Heart right ventricle (tissue), 16 donors: ENCODE measurements at regions of chr11 and their contacts with region 1.

Region 1: GRCh38 chr11:16613512-16614381 is 124.7 kb upstream of the C11orf58 start:
- DNase-seq: peak; percentile 89 to 92
- ATAC-seq: peak; percentile 95 to 98 (median 97)
- H3K4me3 ChIP-seq: peak overlapping the region; percentile 26 to 68 (median 57)
- H3K27ac ChIP-seq: peak overlapping the region; percentile 57 to 90 (median 80)
- H3K4me1 ChIP-seq: peaks cover 0 to 26% (median 9%) of the 10 kb centered on the region in 9 donors
- H3K27me3 ChIP-seq: peaks cover 0 to 100% (median 11%) of the 10 kb centered on the region in 7 donors
- CTCF ChIP-seq: peak; percentile 78 to 97 (median 91)

Region 2: DNA sequence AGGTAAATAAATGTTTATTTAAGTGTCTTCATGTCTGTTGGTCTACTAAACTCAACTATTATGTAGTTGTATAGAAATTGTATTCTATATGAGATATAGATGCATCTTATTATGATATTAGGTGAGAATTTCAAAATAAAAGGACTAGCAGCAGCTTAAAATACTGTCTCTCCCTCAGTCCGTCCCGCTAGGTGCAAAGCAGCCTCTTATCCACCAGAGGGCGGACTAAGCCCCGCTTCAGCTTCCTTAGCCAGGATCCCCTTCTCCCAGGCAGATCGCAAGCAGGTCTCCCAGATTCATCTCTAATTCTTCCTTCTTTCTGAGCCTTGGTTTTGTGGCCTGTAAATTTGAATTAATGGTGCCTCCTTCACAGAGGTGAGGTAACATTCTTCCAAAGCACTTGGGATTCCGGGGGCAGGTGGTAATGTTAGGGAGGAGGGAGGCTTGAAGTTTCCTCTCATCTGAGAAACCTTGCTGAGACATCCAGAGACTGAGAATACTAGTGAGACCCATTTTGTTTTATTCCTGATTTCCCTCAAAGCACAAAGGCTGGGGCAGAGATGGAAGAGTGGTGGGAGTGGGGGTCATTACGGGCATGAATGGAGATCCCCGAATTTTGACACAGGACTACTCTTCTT is 1512.6 kb before region 1 on chr11:
- intact Hi-C with region 1: loop called in 1 of 10 experiments (anchors 2 kb)
- DNase-seq: peak; percentile 41 to 50
- ATAC-seq: peak; percentile 49 to 87 (median 78)
- H3K4me3 ChIP-seq: no peak overlapping the region
- H3K27ac ChIP-seq: no peak overlapping the region
- H3K4me1 ChIP-seq: no peaks in the 10 kb centered on the region
- H3K27me3 ChIP-seq: peaks cover 0 to 37% (median 14%) of the 10 kb centered on the region in 7 donors
- CTCF ChIP-seq: peak; percentile 71 to 94 (median 91)

Region 3: GRCh38 chr11:15650105-15650938 is 963.4 kb before region 1 on chr11:
- intact Hi-C with region 1: loop called in 8 of 10 experiments (anchors 1 to 10 kb)
- DNase-seq: peak; percentile 95 to 97
- ATAC-seq: peak; percentile 99 to 100 (median 99)
- H3K4me3 ChIP-seq: peak overlapping the region in 9 of 10 donors; percentile 18 to 48 (median 42)
- H3K27ac ChIP-seq: peak overlapping the region; percentile 14 to 87 (median 80)
- H3K4me1 ChIP-seq: peaks cover 5 to 28% (median 16%) of the 10 kb centered on the region in 9 donors
- H3K27me3 ChIP-seq: peaks cover 0 to 27% (median 0%) of the 10 kb centered on the region in 7 donors
- CTCF ChIP-seq: peak; percentile 92 to 100 (median 99)

Region 4: GRCh38 chr11:15826826-15827225 is 786.9 kb before region 1 on chr11:
- intact Hi-C with region 1: loop called in 4 of 10 experiments (anchors 2 to 5 kb)
- DNase-seq: peak; percentile 51 to 70
- ATAC-seq: peak in 7 of 8 donors; percentile 17 to 73 (median 55)
- H3K4me3 ChIP-seq: no peak overlapping the region
- H3K27ac ChIP-seq: no peak overlapping the region
- H3K4me1 ChIP-seq: peaks cover 3 to 64% (median 32%) of the 10 kb centered on the region in 9 donors
- H3K27me3 ChIP-seq: no peaks in the 10 kb centered on the region
- CTCF ChIP-seq: peak; percentile 39 to 75 (median 70)

Region 5: DNA sequence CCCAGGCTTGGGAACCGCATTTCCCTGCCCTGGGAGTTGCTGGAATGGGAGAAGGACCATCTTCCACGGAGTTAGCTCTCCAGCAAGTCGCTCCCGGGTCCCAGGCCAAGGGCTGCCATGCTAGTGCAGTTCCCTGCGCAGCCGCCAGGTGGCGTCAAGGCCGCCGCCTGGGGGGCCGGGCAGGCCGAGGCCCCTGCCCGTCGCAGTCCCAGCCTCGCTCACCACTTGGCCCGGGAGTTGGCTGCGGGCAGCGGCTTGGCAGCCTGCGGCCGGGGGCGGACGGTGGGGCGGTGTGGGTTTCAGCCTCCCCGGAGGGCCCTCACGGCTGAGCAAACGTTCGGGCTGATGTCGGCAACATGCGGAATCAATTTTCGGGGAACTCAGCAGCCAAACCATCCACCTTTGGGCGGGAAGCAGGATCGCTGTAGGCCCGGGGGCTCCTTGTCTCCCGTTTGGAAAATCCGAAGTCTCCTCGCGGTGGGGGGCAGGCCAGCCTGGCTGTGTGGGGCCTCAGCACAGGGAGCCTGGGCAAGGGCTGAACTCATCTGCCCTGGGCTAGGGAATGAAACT is 672.5 kb before region 1 on chr11:
- intact Hi-C with region 1: loop called in 2 of 10 experiments (anchors 5 to 10 kb)
- DNase-seq: peak in 1 of 2 donors; percentile 54
- ATAC-seq: peak; percentile 41 to 80 (median 56)
- H3K4me3 ChIP-seq: peak overlapping the region in 1 of 10 donors; percentile 13
- H3K27ac ChIP-seq: no peak overlapping the region
- H3K4me1 ChIP-seq: peaks cover 0 to 5% (median 0%) of the 10 kb centered on the region in 9 donors
- H3K27me3 ChIP-seq: no peaks in the 10 kb centered on the region
- CTCF ChIP-seq: peak; percentile 56 to 91 (median 84)